ENCODE measurements at regions of chr10 and their contacts with region 1.

Region 1: DNA sequence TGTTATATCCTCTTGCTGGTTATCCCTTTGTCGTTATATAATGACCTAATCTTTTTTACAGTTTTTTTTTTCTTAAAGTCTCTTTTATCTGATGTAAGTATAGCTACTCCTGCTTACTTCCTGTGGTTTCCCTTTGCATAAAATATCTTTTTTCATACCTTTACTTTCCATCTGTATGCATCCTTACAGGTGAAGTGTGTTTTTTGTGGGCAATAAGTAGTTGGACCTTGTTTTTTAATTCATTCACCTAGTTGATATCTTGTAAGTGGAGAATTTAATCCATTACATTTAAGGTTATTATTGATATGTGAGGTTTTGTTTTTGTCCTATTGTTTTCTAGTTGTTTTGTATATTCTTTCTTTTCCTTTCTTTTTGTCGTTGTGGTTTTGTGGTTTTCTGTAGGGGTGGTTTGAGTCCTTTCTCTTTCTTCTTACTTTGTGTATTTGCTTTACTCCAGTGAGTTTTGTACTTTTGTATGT is 168.6 kb downstream of the MLLT10 start:
- DNase-seq: peak; percentile 75
- H3K4me3 Mint-ChIP-seq: peak overlapping the region; percentile 54
- H3K27ac Mint-ChIP-seq: peak overlapping the region; percentile 42
- H3K4me1 Mint-ChIP-seq: peaks cover 33% of the 10 kb centered on the region
- H3K27me3 Mint-ChIP-seq: no peaks in the 10 kb centered on the region

Region 2: GRCh38 chr10:21194464-21194993 is 508.1 kb before region 1 on chr10:
- intact Hi-C with region 1: no loop called
- DNase-seq: no peak
- H3K4me3 Mint-ChIP-seq: no peak overlapping the region
- H3K27ac Mint-ChIP-seq: no peak overlapping the region
- H3K4me1 Mint-ChIP-seq: no peaks in the 10 kb centered on the region
- H3K27me3 Mint-ChIP-seq: no peaks in the 10 kb centered on the region

Region 3: GRCh38 chr10:21525367-21526183 is 177.1 kb before region 1 on chr10 and contains the start of gene SKIDA1:
- intact Hi-C with region 1: no loop called
- DNase-seq: peak; percentile 87
- H3K4me3 Mint-ChIP-seq: peak within 1 kb of the TSS; percentile 85
- H3K27ac Mint-ChIP-seq: peak within 1 kb of the TSS; percentile 95
- H3K4me1 Mint-ChIP-seq: peaks cover 29% of the 10 kb centered on the region
- H3K27me3 Mint-ChIP-seq: peaks cover 48% of the 10 kb centered on the region
- total RNA-seq, gene SKIDA1: 0.02 and 0.16 TPM in 2 replicates

Region 4: DNA sequence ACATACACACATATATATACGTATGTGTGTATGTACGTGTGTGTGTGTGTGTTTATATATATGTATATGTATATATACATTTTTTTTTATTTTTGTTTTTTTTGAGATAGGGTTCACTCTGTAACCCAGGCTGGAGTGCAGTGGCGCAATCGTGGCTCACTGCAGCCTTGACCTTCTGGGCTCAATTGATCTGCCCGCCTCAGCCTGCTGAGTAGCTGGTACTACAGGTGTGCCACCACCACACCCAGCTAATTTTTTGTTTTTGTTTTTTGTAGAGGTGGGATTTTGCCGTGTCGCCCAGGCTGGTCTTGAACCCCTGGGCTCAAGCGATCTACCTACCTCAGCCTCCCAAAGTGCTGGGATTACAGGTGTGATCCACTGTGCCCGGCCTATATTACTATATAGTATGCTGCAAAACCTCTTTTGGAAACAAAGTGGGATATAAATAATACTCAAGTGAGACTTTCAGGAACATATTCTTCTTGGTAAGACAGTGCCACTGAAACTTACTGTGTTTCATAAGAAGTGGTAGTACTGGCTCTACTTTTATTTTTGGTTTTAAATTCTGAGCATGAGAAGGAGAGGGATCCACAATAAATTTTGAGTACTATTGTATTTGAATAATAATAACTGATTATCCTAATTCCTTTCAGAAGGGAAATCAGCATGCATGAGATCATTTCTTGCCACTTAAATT is 117.7 kb before region 1 on chr10:
- intact Hi-C with region 1: loop called (anchors 10 kb)
- DNase-seq: no peak
- H3K4me3 Mint-ChIP-seq: no peak overlapping the region
- H3K27ac Mint-ChIP-seq: no peak overlapping the region
- H3K4me1 Mint-ChIP-seq: peaks cover 35% of the 10 kb centered on the region
- H3K27me3 Mint-ChIP-seq: no peaks in the 10 kb centered on the region